PC-9 (cell line): ENCODE measurements at regions of chr22 and their contacts with region 1.

Region 1: GRCh38 chr22:31148953-31149627 is 8.8 kb upstream of the PLA2G3 start:
- DNase-seq: peak; percentile 60 to 71
- H3K4me3 ChIP-seq: no peak overlapping the region
- H3K27ac ChIP-seq: no peak overlapping the region
- H3K4me1 ChIP-seq: 0 out of 2 replicates have a peak, but pooled peaks cover 6% of the 10 kb centered on the region
- H3K27me3 ChIP-seq: no peaks in the 10 kb centered on the region
- CTCF ChIP-seq: peak; percentile 97

Region 2: GRCh38 chr22:30591588-30592359 is 557.3 kb before region 1 on chr22 and contains the start of gene PES1:
- CTCF ChIA-PET with region 1: no interaction called
- POLR2A ChIA-PET with region 1: interaction called, 10 read pairs
- intact Hi-C with region 1: no loop called
- DNase-seq: peak; percentile 92 to 96
- H3K4me3 ChIP-seq: peak within 1 kb of the TSS; percentile 92
- H3K27ac ChIP-seq: peak within 1 kb of the TSS; percentile 37
- H3K4me1 ChIP-seq: peaks cover 13% of the 10 kb centered on the region
- H3K27me3 ChIP-seq: no peaks in the 10 kb centered on the region
- CTCF ChIP-seq: no peak
- total RNA-seq, gene PES1: 94.3 and 127 TPM in 2 replicates

Region 3: GRCh38 chr22:31089160-31090100 is 59.7 kb before region 1 on chr22:
- CTCF ChIA-PET with region 1: no interaction called
- POLR2A ChIA-PET with region 1: no interaction called
- intact Hi-C with region 1: loop called (anchors 1 kb)
- DNase-seq: no peak
- H3K4me3 ChIP-seq: no peak overlapping the region
- H3K27ac ChIP-seq: no peak overlapping the region
- H3K4me1 ChIP-seq: peaks cover under 1% of the 10 kb centered on the region; the same call in 1 of the 2 replicates
- H3K27me3 ChIP-seq: no peaks in the 10 kb centered on the region
- CTCF ChIP-seq: peak; percentile 90

Region 4: GRCh38 chr22:31230871-31231621 is 82.0 kb after region 1 on chr22:
- CTCF ChIA-PET with region 1: no interaction called
- POLR2A ChIA-PET with region 1: no interaction called
- intact Hi-C with region 1: loop called (anchors 1 kb)
- DNase-seq: peak; percentile 30 to 68
- H3K4me3 ChIP-seq: no peak overlapping the region
- H3K27ac ChIP-seq: no peak overlapping the region
- H3K4me1 ChIP-seq: peaks cover 17% of the 10 kb centered on the region
- H3K27me3 ChIP-seq: no peaks in the 10 kb centered on the region
- CTCF ChIP-seq: peak; percentile 83

Region 5: DNA sequence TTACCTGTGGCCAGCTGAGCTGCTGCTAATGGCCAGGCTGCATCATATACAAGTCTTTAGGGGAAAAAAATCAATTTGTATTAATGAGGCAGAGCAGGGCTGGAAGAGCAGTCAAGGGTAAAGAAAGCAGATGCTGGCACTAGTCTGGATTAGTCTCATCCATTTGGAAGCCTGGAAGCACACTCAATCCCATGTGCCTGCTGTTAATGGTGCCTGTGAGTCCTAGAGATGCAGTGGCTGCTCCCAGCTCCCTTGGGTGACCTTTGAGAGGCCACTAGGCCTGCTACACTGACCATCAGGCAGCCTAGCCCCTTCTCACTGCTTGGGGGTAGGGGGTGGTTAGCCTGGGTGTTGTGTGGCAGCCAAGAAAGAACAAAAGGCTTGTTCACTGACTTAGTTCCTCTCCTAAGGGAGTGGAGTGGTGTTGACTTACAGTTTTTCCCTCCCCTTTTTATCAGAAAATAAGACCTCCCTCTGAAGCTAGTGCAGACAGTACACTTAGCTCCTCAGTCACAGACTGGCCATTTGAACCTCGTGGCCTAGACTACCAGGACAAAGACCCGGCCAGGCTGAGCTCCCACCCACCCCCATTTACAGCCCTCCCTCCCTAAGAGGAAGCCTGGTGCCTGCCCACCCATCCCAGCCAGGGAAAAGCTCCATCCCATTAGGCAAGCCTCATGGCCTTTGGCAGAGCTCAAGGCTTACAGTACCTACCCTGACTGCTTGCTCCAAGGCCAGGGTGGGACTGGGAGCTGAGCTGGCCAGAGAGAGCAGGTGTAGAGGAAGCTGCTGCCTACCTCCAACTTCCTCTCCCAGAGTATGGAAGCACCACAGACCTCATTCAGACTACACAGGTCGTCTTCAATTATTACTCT is 135.4 kb after region 1 on chr22:
- CTCF ChIA-PET with region 1: no interaction called
- POLR2A ChIA-PET with region 1: no interaction called
- intact Hi-C with region 1: no loop called
- DNase-seq: no peak
- H3K4me3 ChIP-seq: no peak overlapping the region
- H3K27ac ChIP-seq: no peak overlapping the region
- H3K4me1 ChIP-seq: peaks cover 17% of the 10 kb centered on the region
- H3K27me3 ChIP-seq: no peaks in the 10 kb centered on the region
- CTCF ChIP-seq: no peak

Region 6: GRCh38 chr22:31361743-31362142 is 212.7 kb after region 1 on chr22:
- CTCF ChIA-PET with region 1: no interaction called
- POLR2A ChIA-PET with region 1: interaction called, 12 read pairs
- intact Hi-C with region 1: no loop called
- DNase-seq: no peak
- H3K4me3 ChIP-seq: no peak overlapping the region
- H3K27ac ChIP-seq: no peak overlapping the region
- H3K4me1 ChIP-seq: no peaks in the 10 kb centered on the region
- H3K27me3 ChIP-seq: no peaks in the 10 kb centered on the region
- CTCF ChIP-seq: no peak